Cardiac septum (tissue), 1 donor: ENCODE measurements at regions of chr1 and their contacts with region 1.

Region 1: DNA sequence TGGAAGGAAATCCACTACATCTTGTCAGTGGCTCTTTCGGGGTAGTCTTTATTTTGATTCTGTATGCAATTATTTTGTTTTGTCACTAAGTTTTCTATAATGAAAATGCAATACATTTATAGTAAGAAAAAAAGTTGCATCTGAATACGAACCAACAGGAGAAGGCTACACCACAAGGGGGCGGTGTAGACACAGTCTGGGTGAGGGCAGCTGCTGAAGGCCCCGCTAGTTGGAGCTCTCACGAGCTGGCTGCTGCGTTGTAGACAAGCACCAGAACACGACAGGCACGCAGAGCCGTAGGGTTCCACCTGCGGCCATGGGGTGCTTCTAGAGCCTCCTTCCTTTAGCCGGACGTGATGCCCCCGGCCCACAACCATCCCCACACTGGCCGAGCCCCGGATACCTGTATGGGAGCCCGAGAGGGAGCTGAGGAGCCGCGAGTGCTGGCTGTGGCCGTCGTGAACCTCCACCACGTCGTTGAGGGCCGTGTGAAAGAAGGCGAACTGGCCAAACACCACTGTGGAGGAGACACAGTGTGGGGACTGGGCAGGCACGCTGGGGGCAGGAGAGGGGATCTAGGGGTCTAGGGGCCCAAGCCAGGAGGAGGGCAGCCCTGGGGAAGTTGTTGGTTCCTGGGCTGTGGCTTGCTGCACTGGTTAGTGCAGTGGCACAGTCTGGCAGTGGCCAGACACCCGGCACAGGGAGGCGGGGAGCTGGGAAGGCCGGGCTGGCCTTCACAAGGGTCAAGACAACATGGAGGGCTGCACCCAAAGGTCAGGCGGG is 160.8 kb downstream of the ZSCAN20 start:
- DNase-seq: peak; percentile 91

Region 2: GRCh38 chr1:34742667-34743270 is 1109.6 kb after region 1 on chr1:
- intact Hi-C with region 1: loop called (anchors 5 kb)
- DNase-seq: peak; percentile 80